SK-N-SH (cell line): ENCODE measurements at regions of chr3 and their contacts with region 1.

Region 1: DNA sequence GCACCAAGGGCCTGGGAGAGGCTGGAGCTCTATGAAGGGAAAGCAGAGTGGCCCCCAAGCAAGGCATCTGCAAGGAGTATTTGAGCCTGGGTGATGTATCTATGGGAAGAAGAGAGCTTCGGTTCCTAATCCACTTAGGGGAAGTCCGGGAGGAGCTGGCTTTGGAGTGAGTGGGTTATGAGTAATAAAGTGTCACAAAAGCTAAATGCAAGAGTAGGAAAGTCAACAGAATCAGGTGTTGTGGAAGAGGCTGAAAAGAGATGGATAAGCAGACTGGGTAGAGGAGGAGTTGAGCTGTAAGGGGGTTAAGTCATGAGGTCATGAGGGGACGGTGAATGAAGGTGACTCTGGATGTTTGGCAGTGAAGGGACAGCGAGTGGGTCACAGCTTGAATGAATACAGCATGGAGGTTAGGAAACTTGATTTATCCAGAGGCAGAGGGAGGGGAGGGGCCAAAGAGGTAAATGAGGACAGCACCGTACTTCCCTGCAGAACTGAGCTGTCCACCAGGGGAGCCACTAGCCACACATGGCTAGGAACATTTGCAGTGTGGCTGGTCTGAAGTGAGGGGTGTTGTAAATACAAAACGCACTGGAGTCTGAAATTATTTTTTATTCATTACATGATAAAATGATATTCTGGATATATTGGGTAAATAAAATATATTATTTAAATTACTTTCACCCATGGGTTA is 83.3 kb downstream of the ADCY5 start:
- DNase-seq: peak; percentile 56
- H3K4me3 ChIP-seq: no peak overlapping the region; a peak in 1 of 4 replicates
- H3K27ac ChIP-seq: no peak overlapping the region
- H3K4me1 ChIP-seq: no peaks in the 10 kb centered on the region
- H3K27me3 ChIP-seq: peaks cover 34% of the 10 kb centered on the region; the same call in 1 of the 2 replicates
- CTCF ChIP-seq: peak; percentile 54
- EP300 ChIP-seq: no peak
- RAD21 ChIP-seq: peak; percentile 48

Region 2: DNA sequence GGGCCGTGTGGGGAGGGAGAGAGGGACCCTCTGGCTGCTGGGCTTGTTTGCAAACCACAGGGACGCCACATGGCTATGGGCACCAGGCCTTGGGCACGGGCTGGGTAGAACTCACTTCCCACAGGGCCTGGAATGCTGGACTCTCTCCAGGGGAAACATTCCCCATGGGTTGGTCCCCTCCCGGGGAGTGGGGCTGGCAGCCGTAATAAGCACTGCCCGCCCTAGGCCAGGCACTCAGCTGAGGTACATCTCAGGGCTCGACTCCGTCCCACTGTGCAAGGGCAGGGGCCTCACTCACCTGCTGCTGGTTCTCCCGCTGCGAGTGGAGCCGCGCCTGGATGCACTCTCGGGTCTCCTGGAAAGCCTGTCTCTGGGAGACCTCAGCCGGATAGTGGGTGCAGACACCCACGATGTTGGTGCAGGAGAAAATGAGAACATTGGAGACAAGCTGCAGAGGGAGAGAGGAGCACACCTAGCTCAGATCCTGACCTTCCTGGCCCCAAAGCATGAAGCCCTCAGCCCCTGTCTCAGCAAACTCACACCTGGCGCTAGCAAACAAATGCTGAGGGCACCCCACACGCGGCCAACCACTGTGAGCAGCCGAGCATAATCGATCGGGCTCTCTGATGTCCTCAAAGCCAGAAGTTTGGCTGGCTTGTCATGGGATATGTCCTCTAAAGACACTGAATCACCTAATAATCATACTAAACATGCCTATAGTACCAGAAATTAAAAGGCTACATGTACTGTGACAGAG is 13.3 kb before region 1 on chr3:
- CTCF ChIA-PET with region 1: interaction called, 10 read pairs
- POLR2A ChIA-PET with region 1: no interaction called
- DNase-seq: no peak
- H3K4me3 ChIP-seq: no peak overlapping the region
- H3K27ac ChIP-seq: no peak overlapping the region
- H3K4me1 ChIP-seq: no peaks in the 10 kb centered on the region; a peak in 1 of 4 replicates
- H3K27me3 ChIP-seq: peaks cover 35% of the 10 kb centered on the region
- CTCF ChIP-seq: no peak
- EP300 ChIP-seq: no peak
- RAD21 ChIP-seq: no peak